Ascending aorta (tissue), 2 donors: ENCODE measurements at regions of chr16 and their contacts with region 1.

Region 1: GRCh38 chr16:3023669-3024478 is at the starts of genes HCFC1R1 and THOC6:
- DNase-seq: peak; percentile 91 to 99
- H3K4me3 ChIP-seq: peak within 1 kb of the TSS; percentile 93 to 95
- H3K27ac ChIP-seq: peak within 1 kb of the TSS; percentile 98 to 100
- H3K4me1 ChIP-seq: peaks cover 9 to 30% of the 10 kb centered on the region in 2 donors
- H3K27me3 ChIP-seq: no peaks in the 10 kb centered on the region
- CTCF ChIP-seq: no peak
- total RNA-seq, gene HCFC1R1: 50.8 TPM
- total RNA-seq, gene THOC6: 32.6 TPM

Region 2: DNA sequence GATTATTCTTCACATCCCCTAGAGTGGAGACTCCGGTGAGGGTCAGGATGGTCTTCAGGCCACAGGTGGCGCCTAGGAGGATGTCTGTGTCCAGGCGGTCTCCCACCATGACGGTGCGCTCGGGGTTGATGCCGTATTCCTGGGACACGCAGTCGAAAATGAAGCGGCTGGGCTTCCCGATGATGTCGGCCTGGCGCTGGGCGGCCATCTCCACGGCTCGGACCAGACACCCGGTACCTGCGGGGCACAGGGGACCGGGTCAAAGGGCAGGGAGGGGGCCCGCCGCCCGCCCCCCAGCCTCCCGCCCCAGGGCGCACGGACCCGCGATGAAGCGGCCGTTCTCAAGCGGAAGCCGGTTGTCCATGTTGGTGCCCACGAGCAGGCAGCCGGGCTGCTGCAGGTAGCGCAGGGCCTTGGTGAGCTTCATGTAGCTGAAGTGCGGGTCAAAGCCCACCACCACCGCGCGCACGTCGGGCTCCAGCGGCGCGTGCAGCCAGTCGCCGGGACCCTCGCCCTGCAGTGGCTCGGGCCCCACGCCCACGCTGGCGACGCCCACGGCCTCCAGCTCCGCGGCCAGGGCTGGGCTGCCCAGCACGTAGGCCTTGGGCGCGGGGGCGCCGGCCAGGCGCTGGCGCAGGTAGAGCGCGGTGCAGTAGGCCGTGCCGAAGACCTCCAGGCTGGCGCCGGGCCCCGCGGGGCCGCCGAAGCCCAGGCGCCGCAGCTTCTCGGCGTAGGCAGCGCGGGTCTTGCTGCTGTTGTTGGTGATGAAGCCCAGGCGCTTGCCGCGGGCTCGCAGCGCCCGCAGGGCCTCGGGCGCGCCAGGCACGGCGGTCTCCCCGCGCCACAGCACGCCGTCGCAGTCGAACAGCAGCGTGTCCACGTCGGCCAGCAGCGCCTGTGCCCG is 809.8 kb before region 1 on chr16:
- intact Hi-C with region 1: loop called (anchors 5 kb)
- DNase-seq: no peak
- H3K4me3 ChIP-seq: peak overlapping the region; percentile 93 to 99
- H3K27ac ChIP-seq: peak overlapping the region; percentile 51 to 73
- H3K4me1 ChIP-seq: peaks cover 12 to 22% of the 10 kb centered on the region in 2 donors
- H3K27me3 ChIP-seq: no peaks in the 10 kb centered on the region
- CTCF ChIP-seq: no peak

Region 3: DNA sequence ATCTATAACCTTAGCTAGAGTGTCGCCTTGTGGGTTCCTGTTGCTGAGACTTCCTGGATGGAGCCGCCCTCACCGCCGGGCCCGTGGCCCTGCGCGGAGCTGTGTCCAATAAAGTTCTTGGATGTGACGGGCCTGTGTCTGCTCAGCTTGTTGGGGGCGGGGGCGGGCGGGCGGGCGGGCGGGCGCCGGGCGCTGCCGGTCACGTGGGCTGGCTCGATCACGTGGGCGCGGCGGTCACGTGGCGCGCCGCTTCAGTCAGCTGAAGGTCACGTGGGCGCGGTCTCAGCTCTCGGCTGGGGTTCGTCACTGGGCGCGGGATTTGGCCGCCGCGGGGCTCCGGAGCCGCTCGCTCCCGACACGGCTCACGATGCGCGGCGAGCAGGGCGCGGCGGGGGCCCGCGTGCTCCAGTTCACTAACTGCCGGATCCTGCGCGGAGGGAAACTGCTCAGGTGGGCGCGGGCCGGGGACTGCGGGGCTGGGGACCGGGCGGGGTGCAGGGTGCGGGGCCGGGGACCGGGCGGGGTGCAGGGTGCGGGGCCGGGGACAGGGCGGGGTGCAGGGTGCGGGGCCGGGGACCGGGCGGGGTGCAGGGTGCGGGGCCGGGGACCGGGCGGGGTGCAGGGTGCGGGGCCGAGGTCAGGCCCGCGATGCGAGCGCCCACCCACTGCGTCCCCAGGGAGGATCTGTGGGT is 503.6 kb before region 1 on chr16 and contains the start of gene AMDHD2:
- intact Hi-C with region 1: no loop called
- DNase-seq: peak in 1 of 2 donors; percentile 93
- H3K4me3 ChIP-seq: peak within 1 kb of the TSS; percentile 83 to 87
- H3K27ac ChIP-seq: peak within 1 kb of the TSS; percentile 77 to 80
- H3K4me1 ChIP-seq: peaks cover 12 to 51% of the 10 kb centered on the region in 2 donors
- H3K27me3 ChIP-seq: no peaks in the 10 kb centered on the region
- CTCF ChIP-seq: no peak
- total RNA-seq, gene AMDHD2: 16.1 TPM

Region 4: GRCh38 chr16:2531767-2532493 is 491.9 kb before region 1 on chr16:
- intact Hi-C with region 1: loop called (anchors 10 kb)
- DNase-seq: peak; percentile 94 to 99
- H3K4me3 ChIP-seq: peak overlapping the region; percentile 70 to 80
- H3K27ac ChIP-seq: peak overlapping the region; percentile 97
- H3K4me1 ChIP-seq: peaks cover 0 to 15% of the 10 kb centered on the region in 2 donors
- H3K27me3 ChIP-seq: no peaks in the 10 kb centered on the region
- CTCF ChIP-seq: no peak

Region 5: DNA sequence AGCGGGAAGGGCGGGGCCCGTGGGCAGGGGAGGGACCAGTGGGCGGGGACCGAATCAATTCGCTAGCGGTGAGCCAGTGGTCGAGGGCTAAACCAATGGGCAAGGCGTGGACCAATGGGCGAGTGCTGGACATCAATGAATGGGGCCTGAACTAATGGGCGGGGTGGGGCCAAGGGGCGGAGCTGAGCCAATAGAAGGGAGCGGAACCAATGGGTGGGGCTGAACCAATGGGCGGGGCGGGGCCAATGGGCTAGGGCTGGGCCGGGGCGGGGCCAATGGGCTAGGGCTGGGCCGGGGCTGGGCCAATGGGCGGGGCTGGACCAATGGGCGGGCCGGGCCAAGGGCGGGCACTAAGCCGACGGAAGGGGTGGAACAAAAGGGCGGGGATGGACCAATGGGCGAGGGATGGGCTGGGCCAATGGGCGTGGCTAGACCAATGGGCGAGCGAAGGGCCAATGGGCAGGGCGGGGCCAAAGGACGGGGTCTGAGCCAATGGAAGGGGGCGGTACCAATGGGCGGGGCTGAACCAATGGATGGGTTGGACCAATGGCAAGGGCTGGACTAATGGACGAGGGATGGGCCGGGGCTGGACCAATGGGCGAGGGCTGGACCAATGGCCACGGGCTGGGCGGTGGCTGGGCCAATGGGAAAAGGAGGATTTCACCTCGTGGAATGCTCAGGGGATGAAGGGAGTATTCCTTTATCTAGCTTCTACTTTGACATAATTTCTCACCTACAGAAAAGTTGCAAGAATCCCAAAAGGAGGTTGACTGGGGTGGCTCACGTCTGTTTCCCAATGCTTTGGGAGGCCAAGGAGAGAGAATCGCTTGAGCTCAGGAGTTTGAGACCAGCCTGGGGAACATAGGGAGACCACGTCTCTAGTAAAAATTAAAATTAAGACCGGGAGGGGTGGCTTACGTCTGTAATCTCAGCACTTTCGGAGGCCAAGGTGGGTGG is 118.2 kb before region 1 on chr16:
- intact Hi-C with region 1: loop called (anchors 2 kb)
- DNase-seq: peak; percentile 99 to 100
- H3K4me3 ChIP-seq: peak overlapping the region; percentile 83 to 88
- H3K27ac ChIP-seq: peak overlapping the region; percentile 74 to 92
- H3K4me1 ChIP-seq: peaks cover 0 to 10% of the 10 kb centered on the region in 2 donors
- H3K27me3 ChIP-seq: no peaks in the 10 kb centered on the region
- CTCF ChIP-seq: no peak

Region 6: GRCh38 chr16:3003582-3004302 is 20.1 kb before region 1 on chr16:
- intact Hi-C with region 1: loop called (anchors 1 kb)
- DNase-seq: peak; percentile 87 to 97
- H3K4me3 ChIP-seq: peak overlapping the region in 1 of 2 donors; percentile 26
- H3K27ac ChIP-seq: no peak overlapping the region
- H3K4me1 ChIP-seq: peaks cover 0 to 4% of the 10 kb centered on the region in 2 donors
- H3K27me3 ChIP-seq: peaks cover 10% of the 10 kb centered on the region
- CTCF ChIP-seq: peak; percentile 37 to 66 (median 48)

Region 7: DNA sequence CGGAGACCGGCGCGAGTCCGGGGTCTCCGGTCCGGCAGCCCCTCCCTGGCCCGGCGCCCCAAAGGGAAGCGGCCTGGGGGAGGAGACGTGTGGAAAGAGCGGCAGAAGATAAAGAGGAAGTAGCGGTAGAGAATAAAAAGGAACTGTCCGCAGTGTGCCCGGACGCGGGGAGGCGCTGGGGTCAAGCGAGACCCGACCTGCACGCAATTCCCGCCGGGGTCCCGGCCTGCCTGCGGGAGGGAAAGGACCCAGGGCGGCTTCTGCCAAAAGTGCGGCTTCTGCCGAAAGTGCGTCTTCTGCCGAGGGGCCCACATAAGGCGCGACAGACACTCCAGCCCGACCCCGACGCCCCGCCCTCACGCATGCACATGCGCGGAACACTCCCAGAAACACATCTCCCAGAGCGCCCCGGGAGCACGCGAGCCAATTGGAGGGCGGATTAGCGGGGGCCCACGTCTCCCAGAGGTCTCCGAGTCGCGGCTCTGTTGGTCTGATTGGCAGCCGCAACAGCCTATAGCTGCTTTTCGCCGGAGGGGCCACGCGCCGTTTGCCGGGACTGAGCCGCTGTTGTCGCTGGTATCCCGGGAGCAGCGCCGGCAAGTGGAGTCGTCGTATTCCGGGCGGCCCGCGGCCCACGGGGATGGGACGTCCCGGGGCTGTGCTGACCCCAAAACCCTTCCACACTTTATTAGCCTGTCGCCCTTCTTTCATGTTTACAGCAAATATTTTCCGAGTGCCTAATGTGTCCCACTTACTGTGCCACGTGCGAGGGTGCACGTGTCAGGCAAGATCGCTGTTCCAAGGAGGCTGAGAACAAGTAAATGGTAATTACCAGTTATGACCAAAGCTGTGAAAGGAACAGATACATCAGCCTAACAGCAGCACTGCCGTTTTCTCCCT is 240.5 kb after region 1 on chr16:
- intact Hi-C with region 1: loop called (anchors 10 kb)
- DNase-seq: peak; percentile 90 to 98
- H3K4me3 ChIP-seq: peak overlapping the region; percentile 56 to 66
- H3K27ac ChIP-seq: peak overlapping the region; percentile 89 to 94
- H3K4me1 ChIP-seq: peaks cover 0 to 10% of the 10 kb centered on the region in 2 donors
- H3K27me3 ChIP-seq: no peaks in the 10 kb centered on the region
- CTCF ChIP-seq: peak in 1 of 3 experiments; percentile 33

Region 8: DNA sequence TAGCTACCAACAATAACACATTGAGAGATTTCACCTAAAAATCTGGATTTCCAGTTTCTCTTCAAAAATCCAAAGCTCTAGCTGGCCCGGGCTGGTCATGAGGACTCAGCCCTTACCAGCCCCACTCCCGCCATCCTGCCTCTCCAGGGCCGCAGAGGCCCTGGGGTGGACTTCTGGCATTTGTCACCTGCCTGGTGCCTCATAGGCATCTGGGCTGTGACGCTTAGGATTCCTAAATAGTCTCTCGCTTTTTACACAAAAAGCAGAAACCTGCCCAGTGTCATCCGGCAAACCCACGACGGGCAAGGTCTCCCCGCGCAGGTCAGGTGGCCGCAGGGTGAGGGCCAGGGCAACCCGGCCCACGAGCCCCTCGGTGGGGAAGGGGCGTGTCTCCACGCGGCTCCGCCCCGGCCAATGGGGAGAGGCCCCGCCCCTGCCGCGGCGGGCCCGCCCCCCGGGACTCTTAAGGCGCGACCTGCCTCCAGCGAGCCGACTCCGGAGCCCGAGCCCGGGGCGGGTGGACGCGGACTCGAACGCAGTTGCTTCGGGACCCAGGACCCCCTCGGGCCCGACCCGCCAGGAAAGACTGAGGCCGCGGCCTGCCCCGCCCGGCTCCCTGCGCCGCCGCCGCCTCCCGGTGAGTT is 1347.6 kb after region 1 on chr16 and contains the start of gene VASN:
- intact Hi-C with region 1: loop called (anchors 5 kb)
- DNase-seq: peak in 1 of 2 donors; percentile 91
- H3K4me3 ChIP-seq: peak within 1 kb of the TSS; percentile 64 to 81
- H3K27ac ChIP-seq: peak within 1 kb of the TSS; percentile 94 to 99
- H3K4me1 ChIP-seq: peaks cover 22 to 57% of the 10 kb centered on the region in 2 donors
- H3K27me3 ChIP-seq: no peaks in the 10 kb centered on the region
- CTCF ChIP-seq: no peak
- total RNA-seq, gene VASN: 218 TPM